Mammary epithelial cell (primary cell): ENCODE measurements at regions of chr10 and their contacts with region 1.

Region 1: GRCh38 chr10:86971232-86971991 is 3.1 kb downstream of the ADIRF start:
- DNase-seq: peak; percentile 89
- H3K4me3 ChIP-seq: peak overlapping the region; percentile 40 to 72 (median 70)
- H3K27ac ChIP-seq: peak overlapping the region; percentile 98
- H3K4me1 ChIP-seq: peaks cover 65% of the 10 kb centered on the region
- H3K27me3 ChIP-seq: no peaks in the 10 kb centered on the region
- CTCF ChIP-seq: peak in 1 of 2 donors; percentile 33

Region 2: GRCh38 chr10:87038786-87039185 is 67.4 kb after region 1 on chr10:
- CTCF ChIA-PET with region 1: no interaction called
- dilution Hi-C with region 1: no loop called
- in situ Hi-C with region 1: loop called in 1 of 2 experiments (anchors 5 kb)
- intact Hi-C with region 1: loop called (anchors 2 kb)
- DNase-seq: peak; percentile 68
- H3K4me3 ChIP-seq: no peak overlapping the region
- H3K27ac ChIP-seq: no peak overlapping the region
- H3K4me1 ChIP-seq: peaks cover 16% of the 10 kb centered on the region
- H3K27me3 ChIP-seq: no peaks in the 10 kb centered on the region
- CTCF ChIP-seq: no peak

Region 3: DNA sequence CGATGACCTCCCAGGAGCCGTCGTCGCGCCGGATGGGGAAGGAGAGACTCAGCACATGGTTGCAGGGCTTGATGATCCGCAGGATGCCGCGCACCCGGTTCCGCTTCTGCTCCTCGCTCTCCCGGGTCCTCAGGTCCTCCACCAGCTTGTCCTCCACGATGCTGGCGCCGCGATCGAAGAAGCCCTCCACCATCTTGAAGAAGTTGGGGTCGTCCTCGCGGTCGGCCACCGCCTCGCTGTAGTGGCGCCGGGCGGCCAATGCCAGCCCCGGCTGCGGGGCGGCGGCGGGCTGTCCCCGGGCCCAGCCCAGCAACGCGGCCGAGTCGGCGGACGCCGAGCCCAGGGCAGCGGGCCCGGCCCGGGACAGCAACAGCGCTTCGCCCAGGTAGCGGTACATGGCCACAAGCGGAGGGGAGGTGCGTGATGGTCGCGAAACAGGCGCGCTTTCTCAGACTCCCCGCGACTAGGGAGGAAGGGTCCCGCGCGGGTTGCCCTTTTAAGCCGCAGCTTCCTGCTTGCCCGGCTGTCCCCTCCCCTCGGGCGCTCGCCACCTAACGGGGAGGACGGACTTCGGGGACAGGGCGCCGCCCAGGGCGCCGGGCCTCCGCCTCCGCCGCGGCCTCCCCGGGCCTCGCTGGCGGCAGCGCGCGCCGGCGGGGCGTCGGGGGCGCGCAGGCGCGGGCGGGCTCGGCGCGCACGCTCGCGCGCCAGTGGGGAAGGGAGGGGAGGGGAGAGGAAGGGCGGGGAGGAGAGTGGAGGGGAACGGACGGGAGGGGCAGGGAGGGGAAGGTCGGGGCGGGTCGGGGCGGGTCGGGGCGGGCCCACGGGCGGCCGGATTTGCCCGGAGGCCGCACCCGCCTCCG is 123.2 kb after region 1 on chr10 and contains the starts of genes GLUD1 and SHLD2:
- CTCF ChIA-PET with region 1: no interaction called
- dilution Hi-C with region 1: no loop called
- in situ Hi-C with region 1: no loop called
- intact Hi-C with region 1: loop called (anchors 1 kb)
- DNase-seq: peak; percentile 89
- H3K4me3 ChIP-seq: peak within 1 kb of the TSS; percentile 73 to 84 (median 83)
- H3K27ac ChIP-seq: peak within 1 kb of the TSS; percentile 87
- H3K4me1 ChIP-seq: peaks cover 15% of the 10 kb centered on the region
- H3K27me3 ChIP-seq: no peaks in the 10 kb centered on the region
- CTCF ChIP-seq: peak in 1 of 2 donors; percentile 13
- total RNA-seq, gene GLUD1: 128 to 167 TPM
- total RNA-seq, gene SHLD2: 14.8 to 19.7 TPM